GM12878 (cell line): ENCODE measurements at regions of chr5 and their contacts with region 1.

Region 1: DNA sequence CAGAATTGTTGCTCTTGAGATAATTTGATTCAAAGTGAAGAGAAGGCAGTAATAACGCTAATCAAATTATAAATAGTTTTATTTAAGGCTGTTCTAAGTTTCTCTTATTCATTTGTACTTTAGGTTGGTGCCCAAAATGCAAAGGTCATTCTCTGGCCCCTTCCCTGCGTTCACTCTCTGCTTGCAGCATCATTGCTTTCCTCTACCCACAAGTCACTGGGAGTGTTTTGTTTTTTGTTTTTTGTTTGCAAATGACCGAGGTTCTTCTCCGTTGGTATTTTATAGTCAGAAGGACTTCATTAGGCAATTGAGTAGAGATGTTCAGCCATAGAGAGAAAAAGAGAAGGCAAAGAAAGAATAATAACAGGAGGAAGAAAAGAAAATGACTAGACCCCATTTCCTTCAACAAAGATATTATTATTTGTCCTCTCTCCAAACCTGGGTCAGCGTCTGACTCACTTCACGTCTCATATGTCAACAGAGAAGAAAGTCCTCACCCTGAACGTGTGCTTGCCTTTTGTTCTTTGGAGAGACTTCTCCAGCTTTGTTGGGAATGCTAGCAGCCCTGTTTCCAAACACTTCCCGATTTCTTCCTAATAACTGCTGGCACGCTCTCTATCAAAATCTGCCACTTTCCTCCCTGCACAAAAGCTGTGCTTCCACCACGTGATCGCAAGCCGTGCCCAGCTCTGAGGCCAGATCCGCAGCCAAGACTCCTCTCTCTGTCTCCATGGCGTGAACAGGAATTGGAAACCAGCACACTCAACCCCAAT is 119.8 kb downstream of the EBF1 start:
- DNase-seq: no peak
- ATAC-seq: no peak
- H3K4me3 ChIP-seq: no peak overlapping the region
- H3K27ac ChIP-seq: no peak overlapping the region
- H3K4me1 ChIP-seq: no peaks in the 10 kb centered on the region
- H3K27me3 ChIP-seq: no peaks in the 10 kb centered on the region
- CTCF ChIP-seq: no peak
- EP300 ChIP-seq: no peak
- POLR2A ChIP-seq: no peak
- RAD21 ChIP-seq: no peak

Region 2: DNA sequence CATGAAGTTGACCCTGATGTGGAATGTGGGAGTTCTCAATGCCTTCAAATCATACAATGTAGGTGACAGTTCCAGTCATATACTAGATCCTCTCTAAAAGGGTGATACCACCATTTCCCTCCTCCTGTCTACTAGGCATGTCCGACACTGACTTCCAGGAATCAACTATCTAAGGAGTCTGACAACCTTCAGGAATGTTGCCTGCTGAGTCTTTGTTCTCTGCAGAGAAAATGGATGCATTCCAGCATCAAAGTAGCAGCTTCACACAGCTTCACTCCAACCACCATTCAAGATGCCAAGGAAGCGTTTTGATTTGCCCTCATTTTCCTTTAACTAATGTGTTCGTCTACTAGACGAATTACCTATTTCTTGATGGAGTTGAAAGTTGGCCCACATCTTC is 410.4 kb before region 1 on chr5:
- CTCF ChIA-PET with region 1: no interaction called
- POLR2A ChIA-PET with region 1: no interaction called
- RAD21 ChIA-PET with region 1: no interaction called
- SMC1A ChIA-PET with region 1: no interaction called
- in situ Hi-C with region 1: no loop called
- intact Hi-C with region 1: no loop called
- DNase-seq: no peak
- ATAC-seq: no peak
- H3K4me3 ChIP-seq: no peak overlapping the region
- H3K27ac ChIP-seq: no peak overlapping the region
- H3K4me1 ChIP-seq: peaks cover 4% of the 10 kb centered on the region
- H3K27me3 ChIP-seq: no peaks in the 10 kb centered on the region; a peak in 1 of 4 replicates
- CTCF ChIP-seq: no peak
- EP300 ChIP-seq: no peak
- POLR2A ChIP-seq: no peak
- RAD21 ChIP-seq: no peak

Region 3: GRCh38 chr5:158995694-158996173 is 15.8 kb after region 1 on chr5:
- CTCF ChIA-PET with region 1: interaction called, 12 read pairs
- POLR2A ChIA-PET with region 1: interaction called, 4 read pairs
- RAD21 ChIA-PET with region 1: interaction called, 11 read pairs
- SMC1A ChIA-PET with region 1: interaction called, 18 read pairs
- in situ Hi-C with region 1: no loop called
- intact Hi-C with region 1: no loop called
- DNase-seq: no peak
- ATAC-seq: peak; percentile 93
- H3K4me3 ChIP-seq: no peak overlapping the region
- H3K27ac ChIP-seq: no peak overlapping the region
- H3K4me1 ChIP-seq: peaks cover 6% of the 10 kb centered on the region; the same call in 1 of the 2 replicates
- H3K27me3 ChIP-seq: no peaks in the 10 kb centered on the region
- CTCF ChIP-seq: no peak
- EP300 ChIP-seq: no peak
- POLR2A ChIP-seq: no peak
- RAD21 ChIP-seq: no peak